ENCODE measurements at regions of chr13 and their contacts with region 1.

Region 1: DNA sequence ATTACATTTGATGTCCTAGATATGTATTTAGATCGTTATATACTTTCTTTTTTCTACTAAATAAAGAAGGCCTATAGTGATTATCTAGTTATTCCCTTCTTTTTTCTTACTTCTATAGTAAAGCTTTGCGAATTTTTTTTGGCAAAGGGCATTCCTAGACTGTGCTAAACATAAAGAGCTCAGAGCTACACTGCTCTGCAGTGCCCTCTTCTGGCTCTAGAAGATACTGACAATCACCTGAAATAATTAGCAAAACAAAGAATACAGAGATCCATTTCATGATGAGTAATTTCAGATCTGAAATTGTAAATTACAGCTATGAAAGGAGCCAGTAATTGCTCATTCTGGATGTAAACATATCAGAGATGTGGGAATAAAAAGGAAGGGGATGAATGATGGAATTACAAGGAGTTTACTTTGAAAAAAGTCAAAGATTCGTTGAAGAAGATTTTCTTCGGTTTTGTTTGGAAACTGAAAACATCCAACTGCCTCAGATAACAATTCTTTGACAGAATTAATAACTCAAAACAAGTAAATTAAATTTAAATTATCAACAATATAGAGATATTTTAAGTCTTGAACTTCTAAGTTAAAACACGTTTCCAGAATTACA is 288.5 kb downstream of the NALCN start:
- DNase-seq: peak; percentile 13
- H3K4me3 ChIP-seq: no peak overlapping the region
- H3K27ac ChIP-seq: no peak overlapping the region
- H3K27me3 ChIP-seq: no peaks in the 10 kb centered on the region
- CTCF ChIP-seq: peak; percentile 82

Region 2: DNA sequence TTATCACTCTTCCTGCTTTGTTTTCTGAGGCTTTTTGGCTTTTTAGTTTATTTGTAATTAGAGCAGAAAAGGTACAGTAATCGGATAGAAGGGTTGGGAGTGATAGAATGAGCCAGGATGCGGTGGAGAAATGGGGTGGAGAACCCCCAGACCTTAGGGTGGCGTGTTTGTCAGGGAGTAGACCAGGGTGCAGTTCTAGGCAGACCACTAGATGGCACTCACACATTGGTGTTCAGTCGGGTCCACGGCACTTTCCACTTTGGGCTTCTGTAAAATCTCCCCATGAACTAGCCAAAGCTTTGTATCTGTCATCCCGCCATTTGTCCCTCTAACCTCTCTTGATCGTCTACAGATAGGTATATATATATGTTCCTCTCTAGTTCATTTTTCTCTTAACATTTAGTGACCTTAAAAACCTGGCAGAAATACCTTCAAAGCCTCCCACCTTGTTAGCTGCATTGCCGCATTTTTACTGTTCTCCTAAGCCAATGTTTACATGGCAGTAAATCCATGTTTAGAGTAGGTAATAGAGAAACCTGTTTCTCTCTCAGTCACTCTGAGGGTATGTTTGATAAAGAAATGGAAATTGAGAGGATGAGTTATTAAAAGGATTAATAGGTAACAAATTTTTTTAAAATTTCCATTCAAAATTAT is 1471.6 kb before region 1 on chr13:
- CTCF ChIA-PET with region 1: interaction called, 22 read pairs
- POLR2A ChIA-PET with region 1: no interaction called
- DNase-seq: peak; percentile 18
- H3K4me3 ChIP-seq: no peak overlapping the region
- H3K27ac ChIP-seq: no peak overlapping the region
- H3K27me3 ChIP-seq: peaks cover 15% of the 10 kb centered on the region
- CTCF ChIP-seq: peak; percentile 94

Region 3: GRCh38 chr13:100573121-100573520 is 554.7 kb before region 1 on chr13:
- CTCF ChIA-PET with region 1: interaction called, 21 read pairs
- POLR2A ChIA-PET with region 1: no interaction called
- DNase-seq: peak; percentile 48
- H3K4me3 ChIP-seq: no peak overlapping the region
- H3K27ac ChIP-seq: no peak overlapping the region
- H3K27me3 ChIP-seq: no peaks in the 10 kb centered on the region
- CTCF ChIP-seq: peak; percentile 79

Region 4: GRCh38 chr13:100646030-100646673 is 481.7 kb before region 1 on chr13:
- CTCF ChIA-PET with region 1: interaction called, 11 read pairs
- POLR2A ChIA-PET with region 1: no interaction called
- DNase-seq: no peak
- H3K4me3 ChIP-seq: no peak overlapping the region
- H3K27ac ChIP-seq: no peak overlapping the region
- H3K27me3 ChIP-seq: no peaks in the 10 kb centered on the region
- CTCF ChIP-seq: peak; percentile 63

Region 5: DNA sequence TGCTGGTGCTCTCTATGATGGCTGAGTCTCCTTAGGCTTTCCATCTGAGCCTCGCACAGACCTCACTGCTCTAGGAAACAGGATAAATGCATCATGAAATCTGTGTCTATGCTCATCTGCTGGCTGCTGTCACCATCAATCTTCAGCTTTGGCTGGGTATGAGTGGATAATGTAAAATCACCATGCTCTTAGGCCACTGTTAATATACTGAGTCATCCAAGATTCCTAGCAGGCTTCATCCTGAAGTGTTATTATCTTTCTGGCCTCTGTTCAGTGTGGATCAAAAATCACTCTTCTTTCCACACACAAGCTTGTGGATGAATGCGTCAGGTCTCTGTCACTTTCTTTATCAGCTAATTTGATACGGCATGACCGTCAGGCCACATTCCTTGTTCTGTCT is 29.0 kb before region 1 on chr13:
- CTCF ChIA-PET with region 1: interaction called, 11 read pairs
- POLR2A ChIA-PET with region 1: no interaction called
- DNase-seq: no peak
- H3K4me3 ChIP-seq: no peak overlapping the region
- H3K27ac ChIP-seq: no peak overlapping the region
- H3K27me3 ChIP-seq: no peaks in the 10 kb centered on the region
- CTCF ChIP-seq: no peak

Region 6: GRCh38 chr13:101115762-101116171 is 12.1 kb before region 1 on chr13:
- CTCF ChIA-PET with region 1: interaction called, 16 read pairs
- POLR2A ChIA-PET with region 1: no interaction called
- DNase-seq: no peak
- H3K4me3 ChIP-seq: no peak overlapping the region
- H3K27ac ChIP-seq: no peak overlapping the region
- H3K27me3 ChIP-seq: peaks cover 2% of the 10 kb centered on the region
- CTCF ChIP-seq: peak; percentile 33; the same call in 1 of the 2 replicates

Region 7: DNA sequence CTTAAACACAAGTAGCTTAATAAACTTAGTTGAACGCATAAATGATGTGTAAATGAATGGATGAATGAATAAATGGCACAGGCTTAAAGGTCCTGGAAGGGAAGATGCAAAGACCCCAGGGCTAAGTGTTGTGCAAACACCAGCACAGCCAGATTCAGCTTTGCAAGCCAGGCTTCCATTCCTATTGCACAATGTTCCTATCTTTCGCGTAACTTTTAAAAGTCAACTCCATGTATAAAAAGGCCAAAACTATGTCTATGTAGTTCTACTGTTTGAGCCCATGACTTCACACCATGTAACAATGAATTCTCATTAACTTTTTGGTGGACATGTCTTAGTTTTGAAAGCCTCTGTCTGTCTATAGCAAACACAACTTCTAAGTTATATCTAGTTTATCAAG is 62.5 kb after region 1 on chr13:
- CTCF ChIA-PET with region 1: no interaction called
- POLR2A ChIA-PET with region 1: no interaction called
- DNase-seq: no peak
- H3K4me3 ChIP-seq: no peak overlapping the region
- H3K27ac ChIP-seq: no peak overlapping the region
- H3K27me3 ChIP-seq: no peaks in the 10 kb centered on the region
- CTCF ChIP-seq: no peak

Measured in AG04450 (cell line).